ENCODE measurements at regions of chr3 and their contacts with region 1.

Region 1: GRCh38 chr3:63993653-63994079 is 29.6 kb downstream of the PSMD6 start:
- DNase-seq: peak; percentile 47
- H3K4me3 ChIP-seq: no peak overlapping the region
- H3K27ac ChIP-seq: no peak overlapping the region
- H3K27me3 ChIP-seq: no peaks in the 10 kb centered on the region
- CTCF ChIP-seq: peak; percentile 99

Region 2: GRCh38 chr3:63877737-63878393 is 115.8 kb before region 1 on chr3:
- CTCF ChIA-PET with region 1: interaction called, 10 read pairs
- POLR2A ChIA-PET with region 1: no interaction called
- DNase-seq: peak; percentile 7
- H3K4me3 ChIP-seq: no peak overlapping the region
- H3K27ac ChIP-seq: no peak overlapping the region
- H3K27me3 ChIP-seq: no peaks in the 10 kb centered on the region
- CTCF ChIP-seq: no peak

Region 3: DNA sequence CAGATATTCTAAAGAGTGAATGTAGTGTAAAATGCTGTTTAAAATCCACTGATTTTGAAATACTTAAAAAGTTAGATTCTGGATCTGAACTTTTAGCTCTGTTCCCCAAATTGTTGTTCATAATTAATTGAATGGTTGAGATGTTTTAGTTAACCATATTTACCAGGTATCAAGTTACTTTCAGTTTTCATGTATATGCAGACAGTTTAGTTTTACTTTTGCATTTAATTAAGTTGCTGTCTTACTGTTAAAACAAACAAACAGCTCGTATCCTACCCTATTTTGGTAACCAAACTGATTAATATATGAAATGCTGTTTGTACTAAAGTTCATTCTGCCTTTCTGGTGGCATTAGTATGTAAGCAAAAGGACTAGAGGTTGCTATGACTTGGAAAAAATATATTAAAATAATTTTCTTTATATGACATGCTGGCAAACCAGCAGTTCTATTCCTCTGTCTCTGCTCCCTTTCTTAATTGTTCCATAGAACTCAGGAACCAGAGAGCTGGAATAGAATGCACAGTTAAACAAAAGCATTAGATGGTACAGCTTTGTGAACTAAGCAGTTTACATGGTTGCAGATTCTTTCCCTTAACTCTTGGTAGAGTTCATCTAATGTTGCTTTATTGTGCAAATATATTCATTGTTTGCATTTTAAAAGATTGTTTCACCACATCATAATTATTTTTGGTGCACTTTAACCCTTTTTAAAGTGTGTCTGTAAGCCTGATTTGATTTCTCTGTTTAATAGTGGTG is 42.0 kb before region 1 on chr3:
- CTCF ChIA-PET with region 1: interaction called, 15 read pairs
- POLR2A ChIA-PET with region 1: no interaction called
- DNase-seq: no peak
- H3K4me3 ChIP-seq: no peak overlapping the region
- H3K27ac ChIP-seq: no peak overlapping the region
- H3K27me3 ChIP-seq: no peaks in the 10 kb centered on the region
- CTCF ChIP-seq: no peak

Region 4: DNA sequence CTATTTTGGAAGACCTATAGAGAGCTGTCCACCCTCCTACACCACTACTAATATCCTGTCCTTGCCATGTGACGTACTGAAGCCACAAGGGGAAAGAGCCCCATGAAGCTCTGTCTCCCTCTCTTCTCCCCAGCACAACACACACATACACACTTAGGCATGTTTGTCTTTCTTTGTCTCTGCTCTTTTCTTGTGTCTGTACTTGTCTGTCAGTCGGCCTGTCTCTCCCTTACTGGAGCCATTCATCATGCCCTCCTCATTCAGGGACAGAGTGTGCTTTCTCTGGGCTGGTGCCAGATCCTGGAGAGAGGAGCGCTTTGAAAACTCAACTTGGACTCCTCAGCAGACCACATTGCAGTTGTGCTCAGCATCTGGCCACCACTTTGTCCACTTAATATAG is 17.9 kb before region 1 on chr3:
- CTCF ChIA-PET with region 1: interaction called, 67 read pairs
- POLR2A ChIA-PET with region 1: no interaction called
- DNase-seq: no peak
- H3K4me3 ChIP-seq: no peak overlapping the region
- H3K27ac ChIP-seq: no peak overlapping the region
- H3K27me3 ChIP-seq: no peaks in the 10 kb centered on the region
- CTCF ChIP-seq: no peak

Region 5: DNA sequence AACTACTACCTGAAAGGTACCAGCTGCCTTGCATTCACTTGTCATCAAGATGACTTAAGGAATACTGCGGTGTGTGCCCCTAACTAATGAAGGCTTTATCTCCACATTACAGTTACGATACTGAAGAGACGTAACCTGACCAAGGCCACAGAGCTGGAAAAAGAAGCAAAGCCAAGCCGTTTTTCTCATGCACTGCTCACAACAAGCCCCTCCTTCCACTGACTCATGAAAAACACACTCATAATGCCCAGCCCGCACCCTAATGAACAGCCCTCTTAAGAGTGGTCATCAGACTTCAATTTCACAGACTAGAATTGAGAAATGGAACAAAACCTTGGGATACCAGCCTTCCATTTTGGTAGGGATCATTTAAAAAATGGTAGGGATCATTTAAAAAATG is 18.0 kb after region 1 on chr3:
- CTCF ChIA-PET with region 1: interaction called, 19 read pairs
- POLR2A ChIA-PET with region 1: no interaction called
- DNase-seq: no peak
- H3K4me3 ChIP-seq: no peak overlapping the region
- H3K27ac ChIP-seq: no peak overlapping the region
- H3K27me3 ChIP-seq: no peaks in the 10 kb centered on the region
- CTCF ChIP-seq: no peak

Measured in AG04450 (cell line).